ENCODE measurements at regions of chr4 and their contacts with region 1.

Region 1: GRCh38 chr4:88659055-88659889 is 38.4 kb downstream of the NAP1L5 start:
- DNase-seq: peak; percentile 83
- H3K4me3 ChIP-seq: no peak overlapping the region
- H3K27ac ChIP-seq: no peak overlapping the region
- H3K4me1 ChIP-seq: peaks cover 20% of the 10 kb centered on the region
- H3K27me3 ChIP-seq: no peaks in the 10 kb centered on the region
- CTCF ChIP-seq: peak; percentile 77 to 80
- POLR2A ChIP-seq: no peak

Region 2: DNA sequence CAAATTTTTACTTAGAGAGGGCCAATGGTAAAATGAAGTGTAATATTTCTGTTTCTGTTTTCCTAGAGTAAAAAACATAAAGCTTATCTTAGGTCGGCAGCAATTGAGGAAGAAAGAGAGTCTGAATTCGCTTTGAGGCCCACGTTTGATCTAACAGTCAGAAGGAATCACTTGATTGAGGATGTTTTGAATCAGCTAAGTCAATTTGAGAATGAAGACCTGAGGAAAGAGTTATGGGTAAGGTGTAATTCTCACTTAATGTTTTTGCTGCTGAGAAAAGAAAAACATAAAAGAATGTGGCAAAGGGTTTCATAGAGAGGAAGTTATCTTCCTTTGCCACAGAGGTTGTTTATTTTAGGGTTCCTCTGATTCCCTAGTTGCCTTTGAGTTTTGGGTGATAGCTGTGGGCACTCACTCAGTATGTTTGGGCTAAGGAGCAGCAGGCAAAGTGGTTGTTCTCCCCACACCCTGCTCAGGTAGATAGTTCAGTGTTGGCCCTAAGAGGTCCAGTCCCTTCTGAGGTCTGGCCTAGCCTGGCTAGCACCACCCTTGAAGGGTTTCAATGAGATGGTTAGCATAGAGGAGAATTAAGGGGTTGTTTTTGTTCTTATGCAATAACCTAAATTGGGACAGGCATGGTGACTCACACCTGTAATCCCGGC is 170.0 kb before region 1 on chr4:
- CTCF ChIA-PET with region 1: no interaction called
- POLR2A ChIA-PET with region 1: no interaction called
- dilution Hi-C with region 1: no loop called
- intact Hi-C with region 1: no loop called
- DNase-seq: no peak
- H3K4me3 ChIP-seq: no peak overlapping the region
- H3K27ac ChIP-seq: no peak overlapping the region
- H3K4me1 ChIP-seq: no peaks in the 10 kb centered on the region
- H3K27me3 ChIP-seq: no peaks in the 10 kb centered on the region
- CTCF ChIP-seq: no peak
- POLR2A ChIP-seq: no peak

Region 3: GRCh38 chr4:88528861-88529260 is 130.4 kb before region 1 on chr4:
- CTCF ChIA-PET with region 1: interaction called, 368 read pairs
- POLR2A ChIA-PET with region 1: no interaction called
- dilution Hi-C with region 1: no loop called
- intact Hi-C with region 1: loop called (anchors 1 kb)
- DNase-seq: peak; percentile 25
- H3K4me3 ChIP-seq: no peak overlapping the region
- H3K27ac ChIP-seq: no peak overlapping the region
- H3K4me1 ChIP-seq: peaks cover 32% of the 10 kb centered on the region
- H3K27me3 ChIP-seq: no peaks in the 10 kb centered on the region
- CTCF ChIP-seq: no peak
- POLR2A ChIP-seq: no peak

Region 4: GRCh38 chr4:88600176-88600838 is 59.0 kb before region 1 on chr4:
- CTCF ChIA-PET with region 1: interaction called, 26 read pairs
- POLR2A ChIA-PET with region 1: no interaction called
- dilution Hi-C with region 1: no loop called
- intact Hi-C with region 1: loop called (anchors 2 kb)
- DNase-seq: peak; percentile 92
- H3K4me3 ChIP-seq: peak overlapping the region in 2 of 3 experiments; percentile 4 to 21
- H3K27ac ChIP-seq: peak overlapping the region; percentile 100
- H3K4me1 ChIP-seq: peaks cover 32% of the 10 kb centered on the region
- H3K27me3 ChIP-seq: no peaks in the 10 kb centered on the region
- CTCF ChIP-seq: no peak
- POLR2A ChIP-seq: peak; percentile 27

Region 5: GRCh38 chr4:88628759-88629158 is 30.5 kb before region 1 on chr4:
- CTCF ChIA-PET with region 1: interaction called, 11 read pairs
- POLR2A ChIA-PET with region 1: no interaction called
- dilution Hi-C with region 1: no loop called
- intact Hi-C with region 1: no loop called
- DNase-seq: no peak
- H3K4me3 ChIP-seq: no peak overlapping the region
- H3K27ac ChIP-seq: no peak overlapping the region
- H3K4me1 ChIP-seq: peaks cover 13% of the 10 kb centered on the region
- H3K27me3 ChIP-seq: no peaks in the 10 kb centered on the region
- CTCF ChIP-seq: no peak
- POLR2A ChIP-seq: no peak

Region 6: GRCh38 chr4:88792268-88792781 is 133.1 kb after region 1 on chr4:
- CTCF ChIA-PET with region 1: interaction called, 13 read pairs
- POLR2A ChIA-PET with region 1: no interaction called
- dilution Hi-C with region 1: no loop called
- intact Hi-C with region 1: no loop called
- DNase-seq: no peak
- H3K4me3 ChIP-seq: no peak overlapping the region
- H3K27ac ChIP-seq: no peak overlapping the region
- H3K4me1 ChIP-seq: no peaks in the 10 kb centered on the region
- H3K27me3 ChIP-seq: no peaks in the 10 kb centered on the region
- CTCF ChIP-seq: no peak
- POLR2A ChIP-seq: no peak

Region 7: GRCh38 chr4:89031272-89031671 is 372.0 kb after region 1 on chr4:
- CTCF ChIA-PET with region 1: no interaction called
- POLR2A ChIA-PET with region 1: no interaction called
- dilution Hi-C with region 1: no loop called
- intact Hi-C with region 1: no loop called
- DNase-seq: no peak
- H3K4me3 ChIP-seq: no peak overlapping the region
- H3K27ac ChIP-seq: no peak overlapping the region
- H3K4me1 ChIP-seq: no peaks in the 10 kb centered on the region
- H3K27me3 ChIP-seq: no peaks in the 10 kb centered on the region
- CTCF ChIP-seq: no peak
- POLR2A ChIP-seq: no peak